PC-3 (cell line): ENCODE measurements at regions of chr11 and their contacts with region 1.

Region 1: DNA sequence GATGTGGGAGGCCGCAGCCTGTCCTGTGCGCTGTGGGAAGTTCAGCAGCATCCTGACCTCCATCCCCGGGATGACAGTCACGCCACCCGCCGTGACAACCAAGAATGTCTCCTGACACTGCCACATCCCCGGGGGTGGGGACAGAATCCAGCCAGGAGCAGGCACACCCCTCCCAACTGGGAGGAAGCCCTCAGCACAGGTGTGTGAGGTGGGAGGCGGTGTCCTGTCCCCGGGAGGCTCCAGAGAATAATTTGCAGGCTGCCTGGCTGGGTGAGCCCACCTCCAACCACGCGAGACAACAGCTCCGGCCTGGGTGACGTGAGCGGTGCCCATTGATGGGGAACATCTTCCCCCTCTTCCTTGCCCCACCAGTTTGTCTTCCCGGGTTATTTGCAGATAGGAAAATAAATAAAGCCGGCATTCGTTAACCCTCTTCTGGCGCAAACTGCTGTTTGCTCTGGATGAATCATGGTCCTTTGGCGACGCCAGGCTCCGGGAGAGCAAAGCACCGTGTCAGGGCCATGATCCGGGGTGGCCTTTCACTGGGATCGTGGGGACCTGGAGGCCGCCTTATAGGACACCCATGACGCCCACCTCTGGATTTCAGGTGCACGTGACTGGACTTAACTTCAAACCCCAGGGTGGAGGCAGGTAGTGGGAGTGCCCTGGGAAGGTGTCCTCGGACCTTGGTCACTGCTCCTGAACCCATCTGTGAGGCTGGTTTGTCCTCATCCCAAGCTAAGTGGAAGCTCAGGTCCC is 13.8 kb downstream of the CCND1 start:
- DNase-seq: peak; percentile 97
- ATAC-seq: peak; percentile 62
- H3K4me3 ChIP-seq: no peak overlapping the region; the same call in 1 of the 2 replicates
- H3K27ac ChIP-seq: peak overlapping the region; percentile 87
- H3K4me1 ChIP-seq: peaks cover 57% of the 10 kb centered on the region
- H3K27me3 ChIP-seq: no peaks in the 10 kb centered on the region
- CTCF ChIP-seq: no peak

Region 2: DNA sequence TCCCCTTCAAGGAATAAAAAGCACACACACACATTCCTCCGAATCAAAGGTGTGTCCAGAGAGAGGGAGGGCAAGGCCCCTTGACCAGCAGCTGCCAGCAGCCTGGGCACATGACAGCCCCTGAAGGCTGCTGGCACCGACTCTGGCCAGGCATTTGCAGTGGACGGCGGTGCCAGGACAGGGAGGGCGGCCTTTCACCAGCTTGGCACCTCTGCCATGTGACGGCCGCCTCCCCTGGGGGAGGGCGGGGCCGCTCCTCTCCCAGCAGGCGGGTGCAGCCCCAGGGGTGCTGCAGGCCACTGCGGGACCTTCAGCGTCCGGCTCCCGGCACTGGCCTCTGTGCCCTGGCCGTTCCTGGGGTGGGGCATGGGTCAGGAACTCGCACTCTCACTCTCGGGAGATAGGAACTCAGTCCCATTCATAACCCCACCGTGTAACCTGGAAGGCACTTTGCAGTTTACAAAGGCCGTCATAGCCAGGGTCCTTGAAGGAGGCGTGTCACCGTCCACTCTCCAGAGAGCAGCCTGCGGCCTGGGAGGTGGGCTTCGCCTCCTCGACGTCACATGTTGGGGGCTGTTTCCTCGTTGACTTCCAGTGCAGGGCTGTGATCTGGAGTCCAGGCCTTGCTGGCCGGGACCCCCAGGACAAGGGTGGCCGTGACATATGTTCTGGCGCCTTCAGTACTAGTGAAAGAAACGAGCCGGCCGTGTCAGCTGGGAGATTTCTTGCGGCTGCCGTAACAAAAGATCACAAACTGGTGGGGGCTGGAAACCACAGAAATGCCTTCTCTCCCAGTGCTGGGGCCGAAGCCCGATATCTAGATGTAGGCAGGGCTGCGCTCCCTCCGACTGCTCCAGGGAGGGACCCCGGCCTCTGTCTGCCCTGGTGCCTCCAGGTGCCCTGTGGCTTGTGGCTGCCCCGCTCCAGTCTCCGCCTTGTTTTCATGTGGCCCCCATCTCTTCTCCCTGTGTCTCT is 538.9 kb before region 1 on chr11:
- CTCF ChIA-PET with region 1: no interaction called
- POLR2A ChIA-PET with region 1: interaction called, 24 read pairs
- intact Hi-C with region 1: no loop called
- DNase-seq: peak; percentile 63
- ATAC-seq: peak; percentile 81
- H3K4me3 ChIP-seq: no peak overlapping the region
- H3K27ac ChIP-seq: no peak overlapping the region
- H3K4me1 ChIP-seq: peaks cover 15% of the 10 kb centered on the region
- H3K27me3 ChIP-seq: no peaks in the 10 kb centered on the region
- CTCF ChIP-seq: no peak

Region 3: GRCh38 chr11:69480547-69481392 is 174.0 kb before region 1 on chr11:
- CTCF ChIA-PET with region 1: no interaction called
- POLR2A ChIA-PET with region 1: no interaction called
- intact Hi-C with region 1: no loop called
- DNase-seq: no peak
- ATAC-seq: no peak
- H3K4me3 ChIP-seq: no peak overlapping the region
- H3K27ac ChIP-seq: no peak overlapping the region
- H3K4me1 ChIP-seq: peaks cover 18% of the 10 kb centered on the region
- H3K27me3 ChIP-seq: no peaks in the 10 kb centered on the region
- CTCF ChIP-seq: no peak

Region 4: DNA sequence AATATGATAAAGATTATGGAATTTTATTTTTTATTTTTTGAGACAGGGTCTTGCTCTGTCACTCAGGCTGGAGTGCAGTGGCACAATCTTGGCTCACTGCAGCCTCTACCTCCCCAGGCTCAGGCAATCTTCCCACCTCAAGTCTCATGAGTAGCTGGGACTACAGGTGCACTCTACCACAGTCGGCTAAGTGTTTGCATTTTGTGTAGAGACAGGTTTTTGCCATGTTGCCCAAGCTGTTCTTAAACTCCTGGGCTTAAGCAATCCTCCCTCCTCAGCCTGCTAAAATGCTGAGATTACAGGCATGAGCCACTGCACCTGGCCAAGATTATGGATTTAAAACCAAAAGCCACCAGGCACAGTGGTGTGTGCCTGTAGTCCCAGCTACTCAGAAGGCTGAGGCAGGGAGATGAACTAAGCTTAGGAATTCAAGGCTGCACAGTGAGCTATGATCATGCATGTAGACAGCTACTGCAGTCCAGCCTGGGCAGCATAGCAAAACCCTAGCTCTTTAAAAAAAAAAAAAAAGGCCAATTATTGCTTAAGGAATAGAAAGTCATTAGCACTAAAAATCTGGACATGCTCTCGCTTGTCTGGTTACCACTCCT is 34.0 kb before region 1 on chr11:
- CTCF ChIA-PET with region 1: no interaction called
- POLR2A ChIA-PET with region 1: interaction called, 10 read pairs
- intact Hi-C with region 1: no loop called
- DNase-seq: no peak
- ATAC-seq: no peak
- H3K4me3 ChIP-seq: no peak overlapping the region
- H3K27ac ChIP-seq: no peak overlapping the region
- H3K4me1 ChIP-seq: no peaks in the 10 kb centered on the region
- H3K27me3 ChIP-seq: no peaks in the 10 kb centered on the region
- CTCF ChIP-seq: no peak

Region 5: DNA sequence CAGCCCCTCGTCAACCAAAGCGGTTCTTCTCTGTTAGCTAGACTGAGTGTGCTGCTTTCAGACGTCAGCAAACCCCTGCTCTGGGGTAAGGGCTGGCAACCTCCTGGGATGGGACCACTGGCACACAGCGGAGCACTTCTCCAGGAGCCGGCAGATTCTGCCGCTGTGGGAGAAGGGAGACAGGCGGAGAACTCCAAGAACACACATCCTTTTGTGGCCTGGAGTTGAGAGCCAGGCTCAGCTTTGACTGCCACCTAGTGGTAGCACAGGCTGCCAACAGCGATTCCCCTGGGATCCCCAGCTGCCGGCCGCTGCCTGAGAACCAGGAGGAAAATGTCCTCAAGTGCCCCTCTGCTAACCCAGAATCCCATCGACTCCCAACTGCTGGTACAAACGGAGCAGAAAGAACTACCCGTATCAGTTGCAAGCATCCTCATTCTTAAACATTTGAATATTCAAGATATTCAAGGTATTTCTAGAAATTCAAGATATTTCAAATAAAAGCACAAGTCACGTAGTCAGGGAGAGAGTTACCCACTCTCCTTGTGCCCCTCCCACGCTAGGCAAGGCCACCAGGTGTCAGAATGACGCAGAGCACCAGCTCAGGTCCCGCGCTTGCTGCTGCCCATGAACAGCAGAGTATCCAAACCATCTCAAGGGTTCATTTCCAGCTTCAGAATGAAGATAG is 15.6 kb after region 1 on chr11:
- CTCF ChIA-PET with region 1: no interaction called
- POLR2A ChIA-PET with region 1: interaction called, 3 read pairs
- intact Hi-C with region 1: loop called (anchors 2 kb)
- DNase-seq: peak; percentile 93
- ATAC-seq: peak; percentile 68
- H3K4me3 ChIP-seq: no peak overlapping the region
- H3K27ac ChIP-seq: no peak overlapping the region
- H3K4me1 ChIP-seq: peaks cover 17% of the 10 kb centered on the region
- H3K27me3 ChIP-seq: no peaks in the 10 kb centered on the region
- CTCF ChIP-seq: peak; percentile 98